Right cardiac atrium (tissue), 5 donors: ENCODE measurements at regions of chr7 and their contacts with region 1.

Region 1: DNA sequence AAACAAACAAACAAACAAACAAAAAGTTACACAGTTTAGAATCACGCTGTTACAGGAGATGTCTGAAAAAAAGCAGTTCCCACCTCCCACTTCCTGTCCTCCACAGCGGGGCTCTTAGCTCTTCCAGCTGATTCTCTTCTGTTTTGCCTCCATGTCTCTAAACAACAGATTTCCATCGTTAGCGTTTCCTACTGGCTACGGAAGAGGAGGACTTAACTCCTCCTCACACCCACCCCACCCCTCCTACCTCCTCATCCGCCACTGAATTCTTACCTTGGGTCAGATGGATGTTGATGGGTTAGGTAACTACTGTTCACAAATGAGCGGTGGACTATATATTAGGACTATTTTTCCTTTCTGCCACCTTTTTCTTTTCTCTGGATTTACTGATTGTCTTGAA is 36.8 kb upstream of the NUB1 start:
- DNase-seq: no peak
- ATAC-seq: no peak
- H3K4me3 ChIP-seq: no peak overlapping the region
- H3K27ac ChIP-seq: no peak overlapping the region
- H3K4me1 ChIP-seq: no peaks in the 10 kb centered on the region
- H3K27me3 ChIP-seq: no peaks in the 10 kb centered on the region

Region 2: GRCh38 chr7:150992833-150993302 is 312.0 kb before region 1 on chr7:
- intact Hi-C with region 1: no loop called
- DNase-seq: peak; percentile 83 to 85 (median 83)
- ATAC-seq: peak; percentile 49 to 67
- H3K4me3 ChIP-seq: no peak overlapping the region
- H3K27ac ChIP-seq: peak overlapping the region; percentile 71
- H3K4me1 ChIP-seq: no peaks in the 10 kb centered on the region
- H3K27me3 ChIP-seq: no peaks in the 10 kb centered on the region

Region 3: GRCh38 chr7:151123822-151124464 is 180.9 kb before region 1 on chr7:
- intact Hi-C with region 1: loop called in 2 of 4 experiments (anchors 2 to 10 kb)
- DNase-seq: peak; percentile 85 to 90 (median 86)
- ATAC-seq: peak; percentile 69 to 75
- H3K4me3 ChIP-seq: no peak overlapping the region
- H3K27ac ChIP-seq: no peak overlapping the region
- H3K4me1 ChIP-seq: no peaks in the 10 kb centered on the region
- H3K27me3 ChIP-seq: no peaks in the 10 kb centered on the region

Region 4: DNA sequence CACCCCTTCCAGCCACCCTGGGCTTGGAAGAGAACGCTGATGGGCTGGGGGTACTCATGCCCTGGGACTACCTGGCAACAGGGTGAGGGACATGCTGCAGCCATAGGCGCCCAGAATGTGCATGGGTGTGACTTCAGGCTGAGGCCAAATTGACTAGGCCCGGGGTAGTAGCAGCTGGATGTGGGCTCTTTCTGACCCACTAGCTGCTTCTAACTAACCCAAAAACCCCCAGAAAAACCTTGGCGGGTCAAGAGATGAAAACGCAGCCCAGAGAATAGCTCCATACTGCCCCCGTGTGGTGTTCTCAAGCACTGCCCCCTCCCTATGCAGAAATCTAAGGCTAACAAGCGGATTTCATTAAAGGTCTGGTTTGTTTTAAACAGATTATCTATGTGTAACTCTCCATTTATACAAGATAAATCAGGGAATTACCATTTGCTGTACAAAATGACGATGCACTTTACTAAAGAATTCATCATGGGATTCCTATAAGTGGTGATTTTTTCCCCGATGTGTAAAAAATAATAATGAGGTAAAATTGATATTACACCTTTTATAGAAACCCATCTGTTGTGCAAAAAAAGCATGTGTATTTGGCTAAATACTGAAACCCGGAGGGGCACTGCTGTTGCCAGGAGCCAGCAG is 60.5 kb before region 1 on chr7:
- intact Hi-C with region 1: loop called (anchors 5 kb)
- DNase-seq: peak in 1 of 3 donors; percentile 73
- ATAC-seq: no peak
- H3K4me3 ChIP-seq: no peak overlapping the region
- H3K27ac ChIP-seq: no peak overlapping the region
- H3K4me1 ChIP-seq: peaks cover 6% of the 10 kb centered on the region
- H3K27me3 ChIP-seq: no peaks in the 10 kb centered on the region